Panc1 (cell line): ENCODE measurements at regions of chr7 and their contacts with region 1.

Region 1: DNA sequence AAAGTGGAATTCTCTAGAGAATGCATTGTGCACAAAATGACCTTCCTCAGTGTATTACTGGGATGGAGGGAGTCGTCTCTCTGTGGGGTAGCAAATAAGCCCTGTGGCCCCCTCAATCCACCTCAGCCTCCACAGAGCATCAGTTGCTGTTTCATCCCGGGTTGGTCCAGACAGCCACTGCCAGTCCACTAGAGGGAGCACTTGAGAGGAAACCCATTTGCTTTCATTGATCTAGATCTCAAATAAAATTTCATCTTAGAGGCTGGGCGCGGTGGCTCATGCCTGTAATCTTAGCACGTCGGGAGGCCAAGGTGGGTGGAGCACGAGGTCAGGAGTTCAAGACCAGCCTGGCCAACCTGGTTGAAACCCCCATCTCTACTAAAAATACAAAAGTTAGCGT is 1128.7 kb downstream of the CNTNAP2 start:
- DNase-seq: peak; percentile 32
- ATAC-seq: peak; percentile 48; the same call in 1 of the 2 replicates
- H3K4me3 ChIP-seq: no peak overlapping the region
- H3K27ac ChIP-seq: no peak overlapping the region
- H3K4me1 ChIP-seq: no peaks in the 10 kb centered on the region
- H3K27me3 ChIP-seq: no peaks in the 10 kb centered on the region
- CTCF ChIP-seq: peak; percentile 75

Region 2: DNA sequence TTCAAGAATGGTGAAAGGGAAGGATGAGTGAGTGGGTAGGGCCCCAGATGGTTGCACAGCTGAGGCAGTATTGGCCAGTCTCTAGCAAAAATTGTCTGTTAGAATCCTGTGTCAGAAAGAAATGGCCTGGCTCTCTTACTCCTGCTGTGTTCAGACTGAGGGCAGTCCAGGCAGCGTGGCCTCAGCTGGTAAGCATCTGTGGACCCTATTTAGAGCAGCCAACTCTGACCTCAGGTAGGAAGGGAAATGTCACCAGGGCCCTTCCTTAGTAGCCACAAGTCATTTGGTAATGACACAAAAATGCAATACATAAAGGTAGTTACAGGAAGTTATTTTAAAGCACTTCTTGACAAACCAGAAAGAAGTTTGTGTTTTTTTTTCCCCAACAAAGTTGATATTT is 66.0 kb after region 1 on chr7:
- CTCF ChIA-PET with region 1: no interaction called
- POLR2A ChIA-PET with region 1: no interaction called
- in situ Hi-C with region 1: no loop called
- intact Hi-C with region 1: no loop called
- DNase-seq: no peak
- ATAC-seq: no peak
- H3K4me3 ChIP-seq: no peak overlapping the region
- H3K27ac ChIP-seq: no peak overlapping the region
- H3K4me1 ChIP-seq: no peaks in the 10 kb centered on the region
- H3K27me3 ChIP-seq: no peaks in the 10 kb centered on the region
- CTCF ChIP-seq: no peak

Region 3: GRCh38 chr7:148084138-148084537 is 838.8 kb after region 1 on chr7:
- CTCF ChIA-PET with region 1: no interaction called
- POLR2A ChIA-PET with region 1: no interaction called
- in situ Hi-C with region 1: no loop called
- intact Hi-C with region 1: loop called (anchors 10 kb)
- DNase-seq: peak; percentile 25
- ATAC-seq: peak; percentile 78; the same call in 1 of the 2 replicates
- H3K4me3 ChIP-seq: no peak overlapping the region
- H3K27ac ChIP-seq: no peak overlapping the region
- H3K4me1 ChIP-seq: no peaks in the 10 kb centered on the region
- H3K27me3 ChIP-seq: no peaks in the 10 kb centered on the region
- CTCF ChIP-seq: peak; percentile 79

Region 4: DNA sequence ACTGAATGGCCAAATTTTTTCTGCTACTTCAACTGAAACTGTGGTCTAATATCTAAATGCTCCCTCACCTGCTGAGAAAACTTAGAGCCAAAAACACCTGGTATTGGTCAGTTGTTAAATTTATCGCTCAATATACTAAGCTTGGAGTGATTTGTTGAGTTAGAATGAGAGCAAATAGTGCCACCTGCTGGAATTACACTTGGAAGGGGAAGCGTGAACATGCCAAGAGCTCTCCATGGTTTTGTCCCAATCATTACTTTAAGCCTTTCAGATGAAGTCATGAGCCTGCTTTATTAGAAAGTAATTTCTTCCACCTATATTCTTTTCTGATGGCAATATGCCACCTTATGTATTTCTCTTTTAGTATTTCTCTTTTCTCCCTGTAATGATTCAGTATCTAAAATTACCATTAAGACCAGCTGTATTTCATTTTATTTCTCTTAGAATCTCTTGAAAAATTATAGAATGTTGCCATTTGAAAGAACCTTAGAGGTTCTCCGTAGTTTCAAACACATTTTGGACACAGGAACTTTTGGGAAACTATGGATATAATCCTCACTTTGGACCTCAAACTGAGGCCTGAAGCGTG is 897.5 kb after region 1 on chr7:
- CTCF ChIA-PET with region 1: no interaction called
- POLR2A ChIA-PET with region 1: no interaction called
- in situ Hi-C with region 1: no loop called
- intact Hi-C with region 1: loop called (anchors 10 kb)
- DNase-seq: peak; percentile 18
- ATAC-seq: 0 out of 2 replicates have a peak, but pooled peaks have one; percentile 78
- H3K4me3 ChIP-seq: no peak overlapping the region
- H3K27ac ChIP-seq: no peak overlapping the region
- H3K4me1 ChIP-seq: no peaks in the 10 kb centered on the region
- H3K27me3 ChIP-seq: no peaks in the 10 kb centered on the region
- CTCF ChIP-seq: peak; percentile 67; the same call in 1 of the 2 replicates